Colonic mucosa (tissue), 4 donors: ENCODE measurements at regions of chr17 and their contacts with region 1.

Region 1: DNA sequence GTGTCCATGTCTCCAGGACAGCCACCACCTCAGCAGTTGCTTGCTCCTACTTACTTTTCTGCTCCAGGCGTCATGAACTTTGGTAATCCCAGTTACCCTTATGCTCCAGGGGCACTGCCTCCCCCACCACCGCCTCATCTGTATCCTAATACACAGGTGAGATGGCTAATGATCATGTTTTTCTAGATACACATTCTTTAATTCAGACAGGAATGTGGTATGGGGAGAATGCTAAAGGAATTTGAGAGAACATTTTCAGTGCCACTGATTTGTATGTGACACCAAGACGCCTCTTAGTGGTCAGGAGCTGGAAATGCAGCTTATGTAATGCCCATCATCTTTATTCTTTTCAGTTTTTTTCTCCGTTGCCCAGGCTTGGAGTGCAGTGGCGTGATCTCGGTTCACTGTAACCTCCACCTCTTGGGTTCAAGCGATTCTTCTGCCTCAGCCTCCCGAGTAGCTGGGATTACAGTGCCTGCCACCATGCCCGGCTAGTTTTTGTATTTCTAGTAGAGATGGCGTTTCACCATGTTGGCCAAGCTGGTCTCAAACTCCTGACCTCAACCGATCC is 8.9 kb upstream of the RAPGEFL1 start:
- DNase-seq: peak; percentile 41
- H3K4me3 ChIP-seq: no peak overlapping the region
- H3K27ac ChIP-seq: no peak overlapping the region
- H3K4me1 ChIP-seq: no peaks in the 10 kb centered on the region
- H3K27me3 ChIP-seq: no peaks in the 10 kb centered on the region
- CTCF ChIP-seq: peak; percentile 74

Region 2: GRCh38 chr17:40019140-40019991 is 149.0 kb before region 1 on chr17:
- intact Hi-C with region 1: loop called (anchors 10 kb)
- DNase-seq: no peak
- H3K4me3 ChIP-seq: no peak overlapping the region
- H3K27ac ChIP-seq: no peak overlapping the region
- H3K4me1 ChIP-seq: peaks cover 25% of the 10 kb centered on the region
- H3K27me3 ChIP-seq: no peaks in the 10 kb centered on the region
- CTCF ChIP-seq: no peak

Region 3: GRCh38 chr17:40062329-40063186 is 105.8 kb before region 1 on chr17 and contains the start of gene THRA:
- intact Hi-C with region 1: loop called (anchors 10 kb)
- DNase-seq: peak; percentile 75
- H3K4me3 ChIP-seq: peak within 1 kb of the TSS; percentile 82
- H3K27ac ChIP-seq: peak within 1 kb of the TSS; percentile 77
- H3K4me1 ChIP-seq: peaks cover 13% of the 10 kb centered on the region
- H3K27me3 ChIP-seq: no peaks in the 10 kb centered on the region
- CTCF ChIP-seq: no peak
- total RNA-seq, gene THRA: 40.3 to 44.5 TPM

Region 4: GRCh38 chr17:40098846-40099618 is 69.3 kb before region 1 on chr17:
- intact Hi-C with region 1: no loop called
- DNase-seq: peak; percentile 100
- H3K4me3 ChIP-seq: peak overlapping the region; percentile 73
- H3K27ac ChIP-seq: peak overlapping the region; percentile 94
- H3K4me1 ChIP-seq: peaks cover 48% of the 10 kb centered on the region
- H3K27me3 ChIP-seq: no peaks in the 10 kb centered on the region
- CTCF ChIP-seq: no peak

Region 5: DNA sequence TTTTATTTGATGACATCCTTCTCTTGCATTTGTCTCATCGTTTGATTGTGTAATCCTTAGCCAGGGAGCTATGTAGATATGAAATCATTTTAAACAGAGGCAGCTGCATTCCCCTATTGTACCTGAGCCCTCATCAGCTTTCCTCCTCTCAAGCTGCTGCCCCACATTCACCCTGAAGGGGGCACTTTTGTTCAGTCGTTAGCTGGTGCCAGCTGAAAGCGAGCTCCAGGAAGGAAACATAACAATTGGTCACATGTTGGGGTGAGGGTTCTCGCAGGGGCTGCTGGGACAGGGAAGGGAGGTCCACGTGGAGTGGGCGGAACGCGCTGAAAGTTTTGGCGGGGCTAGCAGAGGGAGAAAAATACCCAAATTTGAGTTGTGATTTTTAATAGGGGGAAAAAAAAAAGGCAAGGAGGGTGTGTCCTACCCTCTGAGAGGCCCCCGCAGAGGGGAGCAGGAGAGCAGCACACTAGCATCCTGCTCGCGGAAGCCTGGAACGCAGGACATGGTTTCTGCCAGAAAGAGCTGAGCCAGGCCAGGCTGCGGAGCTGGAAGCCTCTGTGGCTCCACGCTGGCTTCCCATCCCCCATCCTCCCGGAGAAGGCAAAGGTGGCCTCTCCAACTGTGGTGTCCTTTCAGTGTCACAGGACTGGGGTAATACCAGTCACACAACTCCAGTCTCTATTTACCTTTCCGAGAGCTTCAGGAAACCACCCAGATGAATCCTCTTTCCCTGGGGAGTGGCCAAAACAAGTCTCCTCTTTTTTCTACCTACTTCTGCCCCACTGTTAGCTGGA is 55.0 kb before region 1 on chr17:
- intact Hi-C with region 1: loop called (anchors 5 kb)
- DNase-seq: peak; percentile 98
- H3K4me3 ChIP-seq: peak overlapping the region; percentile 36
- H3K27ac ChIP-seq: peak overlapping the region; percentile 93
- H3K4me1 ChIP-seq: peaks cover 37% of the 10 kb centered on the region
- H3K27me3 ChIP-seq: no peaks in the 10 kb centered on the region
- CTCF ChIP-seq: peak; percentile 76